H1 (cell line): ENCODE measurements at regions of chr15 and their contacts with region 1.

Region 1: GRCh38 chr15:43325039-43325684 is 5.2 kb downstream of the LCMT2 start:
- DNase-seq: no peak
- H3K4me3 ChIP-seq: no peak overlapping the region
- H3K27ac ChIP-seq: no peak overlapping the region
- H3K4me1 ChIP-seq: peaks cover 4 to 10% (median 5%) of the 10 kb centered on the region in 4 experiments; a peak in 6 of 7 replicates
- H3K27me3 ChIP-seq: no peaks in the 10 kb centered on the region
- CTCF ChIP-seq: no peak
- EP300 ChIP-seq: no peak
- POLR2A ChIP-seq: no peak
- RAD21 ChIP-seq: no peak

Region 2: GRCh38 chr15:43292375-43293078 is 32.6 kb before region 1 on chr15:
- CTCF ChIA-PET with region 1: no interaction called
- POLR2A ChIA-PET with region 1: no interaction called
- DNase-seq: no peak
- H3K4me3 ChIP-seq: no peak overlapping the region; a peak in 2 of 8 replicates
- H3K27ac ChIP-seq: no peak overlapping the region
- H3K4me1 ChIP-seq: peaks cover 0 to 8% (median under 1%) of the 10 kb centered on the region in 4 experiments; a peak in 3 of 7 replicates
- H3K27me3 ChIP-seq: no peaks in the 10 kb centered on the region; a peak in 2 of 7 replicates
- CTCF ChIP-seq: no peak
- EP300 ChIP-seq: no peak
- POLR2A ChIP-seq: no peak
- RAD21 ChIP-seq: no peak

Region 3: DNA sequence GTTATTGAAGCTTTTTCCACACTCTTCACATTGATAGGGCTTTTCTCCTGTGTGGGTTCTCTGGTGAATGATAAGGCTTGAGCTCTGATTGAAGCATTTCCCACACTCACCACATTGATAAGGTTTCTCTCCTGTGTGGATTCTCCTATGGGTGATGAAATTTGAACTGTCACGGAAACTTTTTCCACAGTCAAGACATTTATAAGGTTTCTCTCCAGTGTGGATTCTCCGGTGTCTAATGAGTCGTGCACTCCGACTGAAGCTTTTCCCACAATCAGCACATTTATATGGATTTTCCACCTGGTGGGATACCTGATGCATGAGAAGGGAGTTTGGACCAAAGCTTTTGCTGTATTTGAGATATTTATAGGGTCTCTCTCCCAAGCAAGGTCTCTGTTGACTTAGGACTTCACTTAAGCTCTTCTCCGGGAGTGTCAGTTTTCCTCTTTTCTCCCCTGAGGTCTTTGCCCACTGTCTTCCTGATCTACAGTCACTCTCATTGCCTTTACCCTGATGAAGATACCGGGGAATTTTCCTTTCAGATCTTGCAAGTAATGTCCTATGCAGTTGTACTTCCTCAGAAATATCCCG is 36.2 kb after region 1 on chr15:
- CTCF ChIA-PET with region 1: interaction called, 11 read pairs
- POLR2A ChIA-PET with region 1: no interaction called
- DNase-seq: no peak
- H3K4me3 ChIP-seq: no peak overlapping the region
- H3K27ac ChIP-seq: no peak overlapping the region
- H3K4me1 ChIP-seq: no peaks in the 10 kb centered on the region
- H3K27me3 ChIP-seq: no peaks in the 10 kb centered on the region
- CTCF ChIP-seq: no peak
- EP300 ChIP-seq: no peak
- POLR2A ChIP-seq: no peak
- RAD21 ChIP-seq: no peak